ENCODE measurements at regions of chr6 and their contacts with region 1.

Region 1: GRCh38 chr6:135094403-135094848 is 39.8 kb upstream of the HBS1L start:
- DNase-seq: peak in 1 of 2 experiments; percentile 75
- H3K4me3 ChIP-seq: no peak overlapping the region
- H3K27ac ChIP-seq: no peak overlapping the region
- H3K4me1 ChIP-seq: peaks cover 9% of the 10 kb centered on the region
- H3K27me3 ChIP-seq: no peaks in the 10 kb centered on the region
- CTCF ChIP-seq: no peak

Region 2: GRCh38 chr6:135075018-135075417 is 19.4 kb before region 1 on chr6:
- CTCF ChIA-PET with region 1: interaction called, 11 read pairs
- POLR2A ChIA-PET with region 1: no interaction called
- intact Hi-C with region 1: no loop called
- DNase-seq: no peak
- H3K4me3 ChIP-seq: no peak overlapping the region
- H3K27ac ChIP-seq: no peak overlapping the region
- H3K4me1 ChIP-seq: peaks cover 7% of the 10 kb centered on the region
- H3K27me3 ChIP-seq: no peaks in the 10 kb centered on the region
- CTCF ChIP-seq: 0 out of 2 replicates have a peak, but pooled peaks have one; percentile 22

Region 3: DNA sequence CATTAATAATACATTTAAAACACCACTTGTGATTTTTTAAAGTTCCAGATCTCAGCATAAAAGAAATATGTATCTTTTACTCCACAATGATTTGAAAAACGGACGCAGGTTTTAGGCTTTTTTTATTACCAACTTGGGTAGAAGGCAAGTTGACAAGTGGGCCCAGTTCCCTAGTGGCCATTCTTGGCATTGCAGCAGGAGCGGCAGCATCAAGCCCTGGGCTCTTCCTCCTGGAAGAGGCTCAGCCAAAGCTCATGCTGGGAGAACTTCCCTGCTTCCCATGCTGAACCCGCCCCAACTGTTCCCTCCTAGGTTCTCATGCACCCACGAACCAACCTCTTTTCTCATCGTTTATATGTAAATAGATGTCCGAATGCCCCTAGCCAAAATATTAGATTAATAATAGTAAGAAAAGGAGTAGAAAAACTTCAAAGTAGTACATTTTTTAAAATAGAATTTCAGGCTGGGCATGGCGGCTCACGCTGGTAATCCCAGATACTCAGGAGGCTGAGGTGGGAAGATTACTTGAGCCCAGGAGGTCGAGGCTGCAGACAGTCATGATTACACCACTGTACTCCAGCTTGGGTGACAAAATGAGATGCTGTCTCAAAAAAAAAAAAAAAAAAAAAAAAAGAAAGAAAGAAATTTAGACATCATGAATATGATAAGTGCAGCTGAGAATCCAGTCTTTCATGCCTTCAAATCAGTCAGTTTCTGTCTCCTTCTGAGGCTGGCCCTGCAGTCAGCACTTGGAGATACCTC is 68.4 kb after region 1 on chr6:
- CTCF ChIA-PET with region 1: no interaction called
- POLR2A ChIA-PET with region 1: no interaction called
- intact Hi-C with region 1: no loop called
- DNase-seq: peak; percentile 21 to 35
- H3K4me3 ChIP-seq: no peak overlapping the region
- H3K27ac ChIP-seq: no peak overlapping the region
- H3K4me1 ChIP-seq: no peaks in the 10 kb centered on the region
- H3K27me3 ChIP-seq: no peaks in the 10 kb centered on the region
- CTCF ChIP-seq: peak; percentile 92